ENCODE measurements at regions of chr2 and their contacts with region 1.

Region 1: GRCh38 chr2:152175458-152176325 is at the start of gene STAM2:
- H3K4me3 Mint-ChIP-seq: peak within 1 kb of the TSS; percentile 97
- H3K27ac Mint-ChIP-seq: peak within 1 kb of the TSS; percentile 100
- H3K4me1 Mint-ChIP-seq: peaks cover 30% of the 10 kb centered on the region
- H3K27me3 Mint-ChIP-seq: peaks cover 2% of the 10 kb centered on the region

Region 2: DNA sequence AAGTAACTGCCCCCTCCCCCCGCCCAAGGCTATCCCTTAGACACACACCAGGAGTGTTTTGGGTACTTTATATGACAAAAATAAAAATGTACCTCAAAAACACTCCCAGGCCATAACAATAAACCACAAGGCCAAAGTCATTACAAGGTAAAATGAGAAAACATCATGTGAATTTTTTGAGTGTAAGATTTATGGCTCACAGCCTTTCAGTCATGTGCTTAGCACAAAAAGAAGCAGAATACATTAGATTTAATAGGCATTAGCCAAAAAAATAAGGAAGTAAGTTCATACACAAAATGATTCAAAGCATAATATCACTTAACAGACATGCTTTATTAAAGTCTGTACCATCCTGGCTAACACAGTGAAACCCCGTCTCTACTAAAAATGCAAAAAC is 180.5 kb before region 1 on chr2:
- intact Hi-C with region 1: no loop called
- H3K4me3 Mint-ChIP-seq: no peak overlapping the region
- H3K27ac Mint-ChIP-seq: no peak overlapping the region
- H3K4me1 Mint-ChIP-seq: peaks cover 5% of the 10 kb centered on the region
- H3K27me3 Mint-ChIP-seq: peaks cover 5% of the 10 kb centered on the region

Region 3: GRCh38 chr2:152042636-152043615 is 132.8 kb before region 1 on chr2:
- intact Hi-C with region 1: loop called (anchors 2 kb)
- H3K4me3 Mint-ChIP-seq: peak overlapping the region; percentile 50
- H3K27ac Mint-ChIP-seq: peak overlapping the region; percentile 79
- H3K4me1 Mint-ChIP-seq: peaks cover 79% of the 10 kb centered on the region
- H3K27me3 Mint-ChIP-seq: no peaks in the 10 kb centered on the region

Region 4: DNA sequence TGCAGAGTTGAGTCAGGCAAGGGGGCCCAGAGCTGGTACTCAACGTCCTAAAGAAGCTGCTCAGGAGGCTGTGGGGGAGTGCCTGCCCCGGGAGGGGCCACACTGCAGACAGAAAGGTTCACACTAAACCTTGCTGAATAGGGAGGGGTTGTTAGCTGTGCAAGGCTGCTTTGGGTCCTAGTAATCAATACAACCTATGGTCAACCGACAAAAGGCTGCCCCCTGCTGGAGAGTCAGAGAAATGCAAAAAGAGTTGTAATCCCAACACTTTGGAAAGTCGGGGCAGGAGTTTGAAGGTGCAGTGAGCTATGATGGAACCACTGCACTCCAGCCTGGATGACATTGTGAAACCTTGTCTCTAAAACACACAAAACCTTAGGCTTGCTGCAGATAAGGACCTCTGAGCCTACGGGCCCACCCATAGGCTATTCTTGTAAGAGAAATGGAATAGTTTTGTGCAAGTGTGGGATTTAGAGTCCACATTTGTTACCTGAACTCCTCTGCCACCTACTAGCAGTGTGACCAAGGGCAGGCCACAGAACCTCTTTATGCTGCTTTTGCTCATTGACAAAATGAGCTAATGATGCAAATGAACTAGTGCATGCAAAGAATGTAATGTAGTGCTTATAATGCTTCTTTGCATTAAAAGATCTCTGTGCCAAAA is 460.1 kb after region 1 on chr2:
- intact Hi-C with region 1: loop called (anchors 1 kb)
- H3K4me3 Mint-ChIP-seq: no peak overlapping the region
- H3K27ac Mint-ChIP-seq: no peak overlapping the region
- H3K4me1 Mint-ChIP-seq: peaks cover 5% of the 10 kb centered on the region
- H3K27me3 Mint-ChIP-seq: peaks cover 2% of the 10 kb centered on the region

Region 5: DNA sequence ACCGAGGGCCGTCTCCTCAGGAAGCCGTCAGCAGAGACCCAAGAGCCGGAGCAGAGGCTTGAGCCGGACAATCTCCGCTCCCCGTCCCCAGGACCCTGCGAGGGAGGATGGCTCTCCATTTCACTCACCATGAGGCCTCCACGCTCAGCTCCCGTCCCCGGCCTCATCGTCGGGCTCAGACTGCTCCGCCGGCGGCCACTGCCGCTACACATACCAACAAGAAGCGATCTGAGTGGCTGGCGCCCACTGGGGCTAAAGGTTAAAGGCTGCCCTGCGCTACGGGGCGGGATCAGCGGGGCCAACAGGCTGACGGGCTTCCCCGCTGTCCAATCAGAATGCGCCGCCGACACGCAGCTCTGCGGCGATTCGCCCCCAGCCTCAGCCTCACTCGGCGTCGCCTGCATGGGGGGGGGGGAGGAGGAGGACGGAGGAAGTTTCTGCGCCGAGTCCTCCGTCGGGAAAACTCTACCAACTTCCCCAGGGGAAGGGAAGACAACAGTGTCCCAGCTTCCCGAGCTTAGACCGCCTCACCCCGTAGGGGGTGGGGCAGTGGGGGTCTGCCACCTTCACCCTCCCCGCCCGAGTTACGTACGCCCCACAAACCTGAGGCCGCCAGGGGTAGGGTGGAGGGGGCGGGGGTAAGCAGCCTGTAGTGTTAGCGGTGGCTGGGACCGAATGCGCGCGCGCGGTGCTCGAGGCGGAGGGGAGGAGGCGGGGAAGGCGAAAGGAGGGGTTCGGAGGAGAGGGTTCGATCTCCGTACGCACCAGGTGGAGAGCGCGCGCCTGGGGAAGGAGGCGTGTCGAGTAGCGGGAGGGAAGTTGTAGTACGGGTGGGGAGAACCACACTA is 541.8 kb after region 1 on chr2 and contains the start of gene PRPF40A:
- intact Hi-C with region 1: loop called (anchors 5 kb)
- H3K4me3 Mint-ChIP-seq: peak within 1 kb of the TSS; percentile 92
- H3K27ac Mint-ChIP-seq: peak within 1 kb of the TSS; percentile 96
- H3K4me1 Mint-ChIP-seq: peaks cover 31% of the 10 kb centered on the region
- H3K27me3 Mint-ChIP-seq: no peaks in the 10 kb centered on the region